SK-N-SH (cell line): ENCODE measurements at regions of chr1 and their contacts with region 1.

Region 1: DNA sequence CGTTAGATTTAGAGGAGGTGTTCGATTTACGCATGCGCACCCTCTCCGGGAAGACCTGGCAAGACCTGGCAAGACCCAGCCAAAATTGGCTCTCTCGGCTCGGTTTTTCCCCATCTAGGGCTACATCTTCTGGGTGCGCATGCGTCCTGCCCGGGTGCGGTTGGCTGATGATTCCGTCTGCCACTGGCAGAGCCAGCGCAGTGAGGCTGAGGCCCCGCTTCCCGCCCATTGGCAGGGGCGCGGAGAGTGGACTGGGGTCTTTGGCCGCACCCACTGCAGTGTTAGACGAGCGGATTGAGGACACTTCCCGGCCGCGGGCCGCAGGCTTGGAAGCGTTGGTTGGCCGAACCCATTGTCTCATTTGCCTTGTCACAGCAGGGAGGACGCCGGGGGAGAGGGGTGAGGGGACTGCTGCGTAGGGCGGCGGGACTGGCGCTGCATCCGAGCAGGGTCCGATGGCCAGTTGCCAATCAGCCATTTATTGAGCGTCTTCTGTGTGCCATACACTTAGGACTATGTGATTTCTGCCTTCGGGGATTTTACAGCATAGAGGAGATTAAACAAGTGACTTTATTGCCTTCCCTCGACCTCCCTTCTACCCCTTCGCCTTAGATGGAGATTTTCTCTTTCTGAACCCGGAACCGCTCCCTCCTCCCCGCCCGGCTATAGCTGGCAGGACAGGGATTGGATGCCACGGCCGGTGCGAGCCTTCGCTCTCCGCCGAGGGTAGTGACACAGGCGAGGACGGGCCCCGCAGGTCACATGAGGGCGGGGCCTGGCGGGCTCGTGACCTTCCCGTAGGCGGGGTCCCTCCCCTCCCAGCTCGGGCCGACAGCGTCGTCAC is 43.7 kb downstream of the MEF2D start:
- DNase-seq: peak; percentile 96
- H3K4me3 ChIP-seq: peak overlapping the region; percentile 56 to 70
- H3K27ac ChIP-seq: peak overlapping the region; percentile 96 to 97
- H3K4me1 ChIP-seq: peaks cover 3 to 5% of the 10 kb centered on the region in 2 experiments; a peak in 2 of 4 replicates
- H3K27me3 ChIP-seq: no peaks in the 10 kb centered on the region
- CTCF ChIP-seq: no peak
- EP300 ChIP-seq: no peak
- RAD21 ChIP-seq: no peak

Region 2: DNA sequence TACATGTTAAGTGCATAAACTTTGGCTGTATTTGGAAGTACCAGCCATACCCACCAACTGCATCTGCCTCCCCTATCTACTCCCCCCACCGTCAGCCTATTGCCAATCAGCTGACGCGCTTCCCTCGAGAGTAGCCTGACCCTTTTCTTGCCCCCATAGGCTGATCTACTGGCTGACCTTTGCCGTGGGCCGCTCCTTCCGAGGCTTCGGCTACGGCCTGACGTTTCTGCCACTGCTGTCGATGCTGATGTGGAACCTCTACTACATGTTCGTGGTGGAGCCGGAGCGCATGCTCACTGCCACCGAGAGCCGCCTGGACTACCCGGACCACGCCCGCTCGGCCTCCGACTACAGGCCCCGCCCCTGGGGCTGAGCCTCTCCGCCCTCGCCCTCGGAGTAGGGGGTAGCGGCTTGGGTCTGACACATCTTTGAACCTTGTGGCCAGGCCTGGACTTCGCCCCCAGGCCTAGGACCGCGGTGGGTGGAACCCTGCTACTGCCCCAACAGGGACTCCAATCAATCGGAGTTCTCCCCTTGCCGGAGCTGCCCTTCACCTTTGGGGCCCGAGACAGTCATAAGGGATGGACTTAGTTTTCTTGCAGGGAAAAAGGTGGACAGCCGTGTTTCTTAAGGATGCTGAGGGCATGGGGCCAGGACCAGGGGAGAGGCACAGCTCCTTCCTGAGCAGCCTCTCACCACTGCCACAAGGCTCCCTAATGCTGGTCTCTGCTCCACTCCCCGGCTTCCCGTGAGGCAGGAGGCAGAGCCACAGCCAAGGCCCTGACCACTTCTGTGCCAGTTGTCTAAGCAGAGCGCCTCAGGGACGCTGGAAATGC is 165.4 kb before region 1 on chr1:
- CTCF ChIA-PET with region 1: no interaction called
- POLR2A ChIA-PET with region 1: no interaction called
- DNase-seq: peak; percentile 86
- H3K4me3 ChIP-seq: peak overlapping the region; percentile 35 to 40; a peak in 3 of 4 replicates
- H3K27ac ChIP-seq: peak overlapping the region; percentile 36 to 45; a peak in 2 of 4 replicates
- H3K4me1 ChIP-seq: peaks cover 9 to 11% of the 10 kb centered on the region in 2 experiments; a peak in 2 of 4 replicates
- H3K27me3 ChIP-seq: no peaks in the 10 kb centered on the region
- CTCF ChIP-seq: no peak
- EP300 ChIP-seq: no peak
- RAD21 ChIP-seq: no peak

Region 3: GRCh38 chr1:156489166-156489934 is 32.5 kb after region 1 on chr1:
- CTCF ChIA-PET with region 1: interaction called, 11 read pairs
- POLR2A ChIA-PET with region 1: interaction called, 3 read pairs
- DNase-seq: peak; percentile 54
- H3K4me3 ChIP-seq: 0 out of 4 replicates have a peak overlapping the region, but pooled peaks of 1 of the 2 experiments have one; percentile 1
- H3K27ac ChIP-seq: peak overlapping the region; percentile 14 to 35; a peak in 2 of 4 replicates
- H3K4me1 ChIP-seq: peaks cover 30 to 65% of the 10 kb centered on the region in 2 experiments; a peak in 3 of 4 replicates
- H3K27me3 ChIP-seq: no peaks in the 10 kb centered on the region
- CTCF ChIP-seq: no peak
- EP300 ChIP-seq: no peak
- RAD21 ChIP-seq: no peak

Region 4: GRCh38 chr1:156852418-156852874 is 395.6 kb after region 1 on chr1:
- CTCF ChIA-PET with region 1: no interaction called
- POLR2A ChIA-PET with region 1: no interaction called
- DNase-seq: peak; percentile 96
- H3K4me3 ChIP-seq: no peak overlapping the region
- H3K27ac ChIP-seq: peak overlapping the region in 1 of 2 experiments; percentile 94; a peak in 2 of 4 replicates
- H3K4me1 ChIP-seq: peaks cover 0 to 45% of the 10 kb centered on the region in 2 experiments; a peak in 3 of 4 replicates
- H3K27me3 ChIP-seq: peaks cover 6% of the 10 kb centered on the region; the same call in 1 of the 2 replicates
- CTCF ChIP-seq: no peak
- EP300 ChIP-seq: peak in 1 of 2 experiments; percentile 88; a peak in 2 of 4 replicates
- RAD21 ChIP-seq: peak; percentile 0; the same call in 1 of the 2 replicates